IMR-90 (cell line): ENCODE measurements at regions of chr2 and their contacts with region 1.

Region 1: DNA sequence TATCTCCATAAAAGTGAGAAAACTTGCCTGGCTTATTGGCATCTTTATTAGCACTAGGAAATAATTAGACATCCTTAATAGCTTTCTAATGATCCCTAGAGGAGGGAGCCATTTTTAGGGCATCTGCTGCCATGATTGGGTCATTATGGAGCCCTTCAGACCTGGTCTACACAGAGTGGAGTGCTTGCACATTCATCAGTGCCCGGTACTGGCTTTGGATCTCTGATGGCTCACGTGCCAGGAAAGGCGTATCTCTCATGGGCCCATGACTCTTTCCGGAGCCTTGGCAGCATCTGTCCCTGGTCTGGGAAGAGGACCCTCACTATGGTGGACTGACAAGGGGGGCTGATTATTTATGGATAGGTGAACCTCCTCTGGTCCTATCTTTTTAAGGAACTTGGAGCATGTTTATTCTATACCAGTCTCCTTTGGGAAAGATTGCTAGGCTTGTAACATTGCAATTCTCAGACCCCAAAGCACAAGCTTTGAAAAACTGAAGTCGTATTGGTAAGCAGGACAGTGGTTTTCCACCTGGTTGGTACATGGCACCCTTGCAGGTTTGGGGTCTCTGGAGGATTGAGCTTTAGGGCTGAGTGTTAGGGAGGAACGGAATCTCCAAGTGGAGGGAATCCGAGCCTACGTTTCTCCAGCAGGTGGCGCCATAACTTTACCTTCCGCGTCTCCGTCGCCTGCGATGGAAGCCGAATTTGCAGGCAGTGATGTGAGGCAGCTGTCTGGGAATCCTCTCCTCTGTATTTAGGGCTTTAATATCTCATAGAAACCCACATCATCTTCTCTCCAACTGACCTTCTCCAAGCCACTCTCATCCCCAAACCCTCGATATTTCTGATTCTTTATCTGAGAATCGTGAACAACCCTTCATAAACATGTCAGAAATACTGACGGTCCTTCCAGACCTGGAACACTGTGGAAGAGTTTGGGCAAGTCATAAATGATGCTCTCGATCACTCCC is 27.8 kb downstream of the SIX2 start:
- DNase-seq: peak; percentile 73
- ATAC-seq: peak; percentile 92
- H3K4me3 ChIP-seq: no peak overlapping the region
- H3K27ac ChIP-seq: no peak overlapping the region
- H3K4me1 ChIP-seq: no peaks in the 10 kb centered on the region
- H3K27me3 ChIP-seq: peaks cover 28% of the 10 kb centered on the region
- CTCF ChIP-seq: peak; percentile 88
- POLR2A ChIP-seq: 0 out of 2 replicates have a peak, but pooled peaks have one; percentile 33
- RAD21 ChIP-seq: peak; percentile 97

Region 2: DNA sequence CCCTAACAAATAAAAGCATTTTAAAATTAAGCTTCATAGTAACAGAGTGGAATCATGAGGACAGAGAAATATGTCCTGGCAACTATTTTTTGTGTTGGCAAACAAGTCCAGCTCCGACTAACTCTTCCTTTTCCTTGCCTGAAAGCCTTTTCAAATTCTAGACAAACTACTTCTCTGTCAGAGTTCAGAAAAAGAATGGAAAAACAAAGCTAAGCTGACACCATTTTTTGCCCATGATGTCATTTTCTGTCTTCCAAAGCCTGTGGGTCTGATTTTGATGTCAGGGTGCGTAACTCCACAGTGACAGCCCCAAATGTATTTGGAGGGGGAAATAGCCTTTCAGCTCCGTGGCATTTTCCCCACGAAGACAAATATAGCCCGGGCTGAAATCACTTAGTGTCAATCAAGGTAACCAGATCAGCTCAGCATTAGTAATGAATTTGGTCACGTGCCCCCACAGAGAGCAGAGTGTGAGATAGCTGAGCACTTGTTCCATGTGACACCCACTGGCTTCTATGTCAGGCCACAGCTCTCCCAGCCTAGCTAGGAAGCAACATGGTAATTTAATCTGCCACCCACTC is 260.8 kb after region 1 on chr2:
- CTCF ChIA-PET with region 1: no interaction called
- POLR2A ChIA-PET with region 1: no interaction called
- dilution Hi-C with region 1: no loop called
- in situ Hi-C with region 1: no loop called
- intact Hi-C with region 1: loop called (anchors 10 kb)
- DNase-seq: peak; percentile 37
- ATAC-seq: no peak
- H3K4me3 ChIP-seq: no peak overlapping the region
- H3K27ac ChIP-seq: no peak overlapping the region
- H3K4me1 ChIP-seq: peaks cover 16% of the 10 kb centered on the region
- H3K27me3 ChIP-seq: 0 out of 2 replicates have a peak, but pooled peaks cover 2% of the 10 kb centered on the region
- CTCF ChIP-seq: no peak
- POLR2A ChIP-seq: no peak
- RAD21 ChIP-seq: no peak

Region 3: GRCh38 chr2:45494269-45494977 is 513.0 kb after region 1 on chr2:
- CTCF ChIA-PET with region 1: interaction called, 27 read pairs
- POLR2A ChIA-PET with region 1: no interaction called
- dilution Hi-C with region 1: no loop called
- in situ Hi-C with region 1: loop called (anchors 5 kb)
- intact Hi-C with region 1: loop called (anchors 1 kb)
- DNase-seq: peak; percentile 79
- ATAC-seq: peak; percentile 62; the same call in 1 of the 2 replicates
- H3K4me3 ChIP-seq: no peak overlapping the region
- H3K27ac ChIP-seq: no peak overlapping the region
- H3K4me1 ChIP-seq: no peaks in the 10 kb centered on the region; the same call in 1 of the 2 replicates
- H3K27me3 ChIP-seq: no peaks in the 10 kb centered on the region
- CTCF ChIP-seq: peak; percentile 93
- POLR2A ChIP-seq: no peak
- RAD21 ChIP-seq: peak; percentile 89

Region 4: DNA sequence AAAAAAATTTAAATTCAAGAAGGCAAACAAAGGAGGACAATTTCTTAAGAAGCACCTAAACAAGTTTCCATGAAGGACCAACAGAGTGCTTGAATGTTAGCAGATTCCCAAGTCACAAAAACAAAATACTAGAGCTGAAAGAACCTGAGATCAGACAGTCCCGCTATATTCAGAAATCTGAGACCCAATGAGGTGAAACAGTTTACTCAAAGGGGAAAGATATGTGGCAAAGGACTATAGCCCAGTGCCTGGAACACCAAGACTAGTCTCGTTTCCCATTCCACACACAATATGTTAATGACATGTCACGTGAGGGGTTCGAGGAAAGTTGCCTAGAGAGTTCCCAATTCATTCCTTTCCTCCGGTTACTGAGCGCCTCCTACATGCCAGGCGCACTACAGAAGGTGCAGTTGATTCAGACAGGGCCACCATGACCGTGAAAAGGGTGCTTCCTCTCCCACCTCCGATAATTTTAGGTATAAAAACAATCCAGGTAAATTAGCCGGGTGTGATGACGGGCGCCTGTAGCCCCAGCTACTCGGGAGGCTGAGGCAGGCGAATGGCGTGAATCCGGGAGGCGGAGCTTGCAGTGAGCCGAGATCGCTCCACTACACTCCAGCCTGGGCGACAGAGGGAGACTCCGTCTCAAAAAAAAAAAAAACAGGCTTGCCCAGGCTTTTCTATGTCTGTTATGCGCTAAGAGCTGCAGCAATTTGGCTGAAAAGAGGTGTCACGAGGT is 629.0 kb after region 1 on chr2:
- CTCF ChIA-PET with region 1: no interaction called
- POLR2A ChIA-PET with region 1: no interaction called
- dilution Hi-C with region 1: no loop called
- in situ Hi-C with region 1: no loop called
- intact Hi-C with region 1: loop called (anchors 1 kb)
- DNase-seq: peak; percentile 59
- ATAC-seq: peak; percentile 61
- H3K4me3 ChIP-seq: peak overlapping the region; percentile 66
- H3K27ac ChIP-seq: peak overlapping the region; percentile 35
- H3K4me1 ChIP-seq: peaks cover 4% of the 10 kb centered on the region
- H3K27me3 ChIP-seq: no peaks in the 10 kb centered on the region
- CTCF ChIP-seq: peak; percentile 31; the same call in 1 of the 2 replicates
- POLR2A ChIP-seq: no peak
- RAD21 ChIP-seq: peak; percentile 29; the same call in 1 of the 2 replicates